H1 (cell line): ENCODE measurements at regions of chr4 and their contacts with region 1.

Region 1: DNA sequence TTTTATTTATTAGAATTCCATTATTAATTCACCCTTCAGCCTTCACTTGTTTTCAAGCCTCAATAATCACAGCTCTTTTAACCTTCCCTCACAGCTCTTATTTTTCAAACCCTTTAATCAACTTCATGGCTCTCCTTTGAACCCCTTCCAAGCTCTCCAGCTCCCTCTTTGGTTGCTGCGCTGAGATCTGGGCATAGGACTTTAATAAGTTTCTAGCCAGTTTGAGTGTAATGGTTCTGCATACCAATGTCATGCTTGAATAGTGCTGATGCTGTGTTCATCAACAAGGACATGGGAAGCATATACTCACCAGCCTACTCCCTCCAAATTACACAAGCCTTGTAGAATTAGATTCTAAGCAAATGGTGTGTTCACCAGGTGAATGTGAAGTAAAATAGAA is 3.5 kb upstream of the RNF212 start:
- DNase-seq: no peak
- H3K4me3 ChIP-seq: no peak overlapping the region
- H3K27ac ChIP-seq: no peak overlapping the region
- H3K4me1 ChIP-seq: peaks cover 0 to 4% (median 0%) of the 10 kb centered on the region in 4 experiments; a peak in 1 of 7 replicates
- H3K27me3 ChIP-seq: peaks cover 4 to 16% (median 13%) of the 10 kb centered on the region in 4 experiments
- CTCF ChIP-seq: peak in 1 of 3 experiments; percentile 18; a peak in 1 of 4 replicates
- EP300 ChIP-seq: no peak
- POLR2A ChIP-seq: no peak
- RAD21 ChIP-seq: peak; percentile 11 to 24; a peak in 2 of 4 replicates

Region 2: GRCh38 chr4:1092026-1092982 is 24.5 kb before region 1 on chr4:
- CTCF ChIA-PET with region 1: interaction called, 12 read pairs
- POLR2A ChIA-PET with region 1: no interaction called
- DNase-seq: peak in 1 of 2 experiments; percentile 57
- H3K4me3 ChIP-seq: no peak overlapping the region
- H3K27ac ChIP-seq: no peak overlapping the region
- H3K4me1 ChIP-seq: no peaks in the 10 kb centered on the region; a peak in 1 of 7 replicates
- H3K27me3 ChIP-seq: no peaks in the 10 kb centered on the region
- CTCF ChIP-seq: peak in 2 of 3 experiments; percentile 57 to 67; a peak in 3 of 4 replicates
- EP300 ChIP-seq: no peak
- POLR2A ChIP-seq: no peak
- RAD21 ChIP-seq: peak; percentile 16 to 53; a peak in 3 of 4 replicates

Region 3: GRCh38 chr4:1130316-1131186 is 13.7 kb after region 1 on chr4:
- CTCF ChIA-PET with region 1: interaction called, 25 read pairs
- POLR2A ChIA-PET with region 1: no interaction called
- DNase-seq: peak in 1 of 2 experiments; percentile 84
- H3K4me3 ChIP-seq: no peak overlapping the region
- H3K27ac ChIP-seq: no peak overlapping the region
- H3K4me1 ChIP-seq: no peaks in the 10 kb centered on the region; a peak in 1 of 7 replicates
- H3K27me3 ChIP-seq: no peaks in the 10 kb centered on the region
- CTCF ChIP-seq: peak; percentile 89 to 99 (median 97)
- EP300 ChIP-seq: no peak
- POLR2A ChIP-seq: no peak
- RAD21 ChIP-seq: peak; percentile 88 to 92